ENCODE measurements at regions of chr3 and their contacts with region 1.

Region 1: GRCh38 chr3:56260262-56260661 is 208.0 kb downstream of the ERC2 start:
- DNase-seq: peak; percentile 46
- ATAC-seq: peak; percentile 65
- H3K4me3 Mint-ChIP-seq: no peak overlapping the region
- H3K27ac Mint-ChIP-seq: no peak overlapping the region
- H3K4me1 Mint-ChIP-seq: peaks cover 19% of the 10 kb centered on the region
- H3K27me3 Mint-ChIP-seq: no peaks in the 10 kb centered on the region
- CTCF ChIP-seq: 0 out of 2 replicates have a peak, but pooled peaks have one; percentile 21

Region 2: GRCh38 chr3:56275120-56275519 is 14.9 kb after region 1 on chr3:
- CTCF ChIA-PET with region 1: interaction called, 18 read pairs
- POLR2A ChIA-PET with region 1: no interaction called
- DNase-seq: no peak
- ATAC-seq: no peak
- H3K4me3 Mint-ChIP-seq: no peak overlapping the region
- H3K27ac Mint-ChIP-seq: no peak overlapping the region
- H3K4me1 Mint-ChIP-seq: peaks cover 15% of the 10 kb centered on the region
- H3K27me3 Mint-ChIP-seq: no peaks in the 10 kb centered on the region; the same call in 1 of the 2 replicates
- CTCF ChIP-seq: no peak

Region 3: GRCh38 chr3:56303487-56303886 is 43.2 kb after region 1 on chr3:
- CTCF ChIA-PET with region 1: interaction called, 13 read pairs
- POLR2A ChIA-PET with region 1: no interaction called
- DNase-seq: peak; percentile 72
- ATAC-seq: peak; percentile 98
- H3K4me3 Mint-ChIP-seq: no peak overlapping the region
- H3K27ac Mint-ChIP-seq: peak overlapping the region; percentile 71; the same call in 1 of the 2 replicates
- H3K4me1 Mint-ChIP-seq: peaks cover 25% of the 10 kb centered on the region
- H3K27me3 Mint-ChIP-seq: no peaks in the 10 kb centered on the region
- CTCF ChIP-seq: peak; percentile 61

Measured in WTC11 (cell line).